CD4-positive, alpha-beta T cell (primary cell): ENCODE measurements at regions of chr7 and their contacts with region 1.

Region 1: DNA sequence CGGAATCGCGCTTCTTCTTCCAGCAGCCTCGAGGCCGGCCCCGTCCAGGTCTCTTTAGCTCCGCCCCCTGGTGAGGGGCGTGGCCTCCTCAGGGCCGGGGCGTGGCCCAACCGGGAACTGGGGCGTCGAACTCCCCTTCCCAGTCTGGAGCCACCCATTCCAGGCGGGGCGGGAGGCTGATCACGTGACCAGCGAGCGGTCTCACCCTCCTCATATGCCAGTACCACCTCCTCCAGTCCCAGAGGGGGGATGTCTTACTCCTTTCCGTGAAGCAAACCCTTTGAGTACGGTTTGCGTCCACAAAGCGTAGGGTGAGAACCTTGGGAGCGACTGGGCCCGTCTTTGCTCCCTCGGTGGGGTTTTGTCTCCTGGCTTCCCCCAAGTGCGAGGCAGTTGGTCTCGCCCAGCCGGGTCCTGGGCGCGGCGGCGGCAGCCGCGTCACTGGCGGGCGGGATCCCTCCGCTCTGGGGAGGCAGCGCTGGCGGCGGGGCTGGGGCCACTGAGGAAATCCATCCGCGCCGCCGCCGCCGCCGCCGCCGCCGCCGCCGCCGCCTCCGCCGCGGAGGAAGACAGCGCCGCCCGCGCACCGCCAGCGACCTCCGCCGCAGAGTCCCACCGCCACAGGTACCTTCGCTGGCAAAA is at the start of gene GNB2:
- DNase-seq: peak; percentile 91 to 99 (median 97)
- ATAC-seq: peak; percentile 51
- H3K4me3 ChIP-seq: peak within 1 kb of the TSS; percentile 94
- H3K4me3 Mint-ChIP-seq: peak within 1 kb of the TSS; percentile 99
- H3K27ac ChIP-seq: peak within 1 kb of the TSS; percentile 89 to 94
- H3K27ac Mint-ChIP-seq: peak within 1 kb of the TSS; percentile 92
- H3K4me1 ChIP-seq: peaks cover 33% of the 10 kb centered on the region
- H3K4me1 Mint-ChIP-seq: peaks cover 22% of the 10 kb centered on the region
- H3K27me3 ChIP-seq: no peaks in the 10 kb centered on the region
- H3K27me3 Mint-ChIP-seq: no peaks in the 10 kb centered on the region
- CTCF ChIP-seq: no peak
- total RNA-seq, gene GNB2: 87.8 to 91.9 TPM

Region 2: GRCh38 chr7:100435401-100436304 is 237.8 kb before region 1 on chr7:
- CTCF ChIA-PET with region 1: no interaction called
- POLR2A ChIA-PET with region 1: no interaction called
- intact Hi-C with region 1: loop called in 1 of 2 experiments (anchors 5 kb)
- DNase-seq: peak; percentile 29 to 77 (median 48)
- ATAC-seq: peak; percentile 48
- H3K4me3 ChIP-seq: peak overlapping the region; percentile 67
- H3K4me3 Mint-ChIP-seq: peak overlapping the region; percentile 95
- H3K27ac ChIP-seq: peak overlapping the region; percentile 87 to 90
- H3K27ac Mint-ChIP-seq: peak overlapping the region; percentile 100
- H3K4me1 ChIP-seq: peaks cover 57% of the 10 kb centered on the region
- H3K4me1 Mint-ChIP-seq: peaks cover 48% of the 10 kb centered on the region
- H3K27me3 ChIP-seq: no peaks in the 10 kb centered on the region
- H3K27me3 Mint-ChIP-seq: no peaks in the 10 kb centered on the region
- CTCF ChIP-seq: no peak

Region 3: GRCh38 chr7:100604028-100604975 is 69.1 kb before region 1 on chr7:
- CTCF ChIA-PET with region 1: no interaction called
- POLR2A ChIA-PET with region 1: no interaction called
- intact Hi-C with region 1: loop called in 1 of 2 experiments (anchors 2 kb)
- DNase-seq: peak; percentile 57 to 90 (median 69)
- ATAC-seq: peak; percentile 66
- H3K4me3 ChIP-seq: peak overlapping the region; percentile 86
- H3K4me3 Mint-ChIP-seq: peak overlapping the region; percentile 92
- H3K27ac ChIP-seq: peak overlapping the region; percentile 13 to 63
- H3K27ac Mint-ChIP-seq: peak overlapping the region; percentile 76
- H3K4me1 ChIP-seq: peaks cover 29% of the 10 kb centered on the region
- H3K4me1 Mint-ChIP-seq: peaks cover 23% of the 10 kb centered on the region
- H3K27me3 ChIP-seq: no peaks in the 10 kb centered on the region
- H3K27me3 Mint-ChIP-seq: no peaks in the 10 kb centered on the region
- CTCF ChIP-seq: peak; percentile 62

Region 4: GRCh38 chr7:100626530-100627237 is 46.7 kb before region 1 on chr7:
- CTCF ChIA-PET with region 1: interaction called, 3 read pairs
- POLR2A ChIA-PET with region 1: interaction called, 9 read pairs
- intact Hi-C with region 1: loop called (anchors 2 to 5 kb)
- DNase-seq: peak; percentile 84 to 96 (median 89)
- ATAC-seq: peak; percentile 98
- H3K4me3 ChIP-seq: peak overlapping the region; percentile 52
- H3K4me3 Mint-ChIP-seq: peak overlapping the region; percentile 78
- H3K27ac ChIP-seq: peak overlapping the region; percentile 62 to 73
- H3K27ac Mint-ChIP-seq: peak overlapping the region; percentile 62
- H3K4me1 ChIP-seq: peaks cover 36% of the 10 kb centered on the region
- H3K4me1 Mint-ChIP-seq: peaks cover 26% of the 10 kb centered on the region
- H3K27me3 ChIP-seq: no peaks in the 10 kb centered on the region
- H3K27me3 Mint-ChIP-seq: no peaks in the 10 kb centered on the region
- CTCF ChIP-seq: no peak

Region 5: GRCh38 chr7:100691676-100692577 is 18.5 kb after region 1 on chr7:
- CTCF ChIA-PET with region 1: interaction called, 3 read pairs
- POLR2A ChIA-PET with region 1: interaction called, 26 read pairs
- intact Hi-C with region 1: loop called in 1 of 2 experiments (anchors 1 kb)
- DNase-seq: peak; percentile 71 to 91 (median 79)
- ATAC-seq: peak; percentile 77
- H3K4me3 ChIP-seq: peak overlapping the region; percentile 75
- H3K4me3 Mint-ChIP-seq: peak overlapping the region; percentile 97
- H3K27ac ChIP-seq: no peak overlapping the region
- H3K27ac Mint-ChIP-seq: peak overlapping the region; percentile 85
- H3K4me1 ChIP-seq: peaks cover 62% of the 10 kb centered on the region
- H3K4me1 Mint-ChIP-seq: peaks cover 34% of the 10 kb centered on the region
- H3K27me3 ChIP-seq: no peaks in the 10 kb centered on the region
- H3K27me3 Mint-ChIP-seq: no peaks in the 10 kb centered on the region
- CTCF ChIP-seq: peak; percentile 87